MCF 10A (cell line): ENCODE measurements at regions of chr1 and their contacts with region 1.

Region 1: DNA sequence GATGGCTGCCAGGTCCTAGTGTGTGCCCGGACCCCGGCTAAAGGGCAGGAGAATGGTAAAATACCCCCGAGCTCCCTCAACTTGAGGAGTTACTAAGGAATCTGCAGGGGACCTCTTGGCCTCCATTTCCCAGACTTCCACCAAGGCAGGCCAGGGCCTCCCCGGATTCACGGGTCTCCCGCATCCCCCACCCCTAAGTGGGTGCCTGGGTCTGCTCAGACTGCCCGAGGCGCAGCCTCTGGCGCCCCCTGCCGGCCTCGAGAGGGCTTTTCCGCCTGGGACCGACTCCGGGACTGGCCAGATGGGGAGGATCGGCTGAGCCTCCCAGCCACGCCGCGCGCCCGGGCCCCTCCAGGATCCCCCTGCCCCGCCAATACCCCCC is 1.7 kb downstream of the PLEKHG5 start:
- DNase-seq: peak; percentile 78
- H3K4me3 Mint-ChIP-seq: peak overlapping the region; percentile 77
- H3K27ac Mint-ChIP-seq: peak overlapping the region; percentile 66
- H3K4me1 Mint-ChIP-seq: peaks cover 38% of the 10 kb centered on the region
- H3K27me3 Mint-ChIP-seq: no peaks in the 10 kb centered on the region
- CTCF ChIP-seq: peak; percentile 97

Region 2: DNA sequence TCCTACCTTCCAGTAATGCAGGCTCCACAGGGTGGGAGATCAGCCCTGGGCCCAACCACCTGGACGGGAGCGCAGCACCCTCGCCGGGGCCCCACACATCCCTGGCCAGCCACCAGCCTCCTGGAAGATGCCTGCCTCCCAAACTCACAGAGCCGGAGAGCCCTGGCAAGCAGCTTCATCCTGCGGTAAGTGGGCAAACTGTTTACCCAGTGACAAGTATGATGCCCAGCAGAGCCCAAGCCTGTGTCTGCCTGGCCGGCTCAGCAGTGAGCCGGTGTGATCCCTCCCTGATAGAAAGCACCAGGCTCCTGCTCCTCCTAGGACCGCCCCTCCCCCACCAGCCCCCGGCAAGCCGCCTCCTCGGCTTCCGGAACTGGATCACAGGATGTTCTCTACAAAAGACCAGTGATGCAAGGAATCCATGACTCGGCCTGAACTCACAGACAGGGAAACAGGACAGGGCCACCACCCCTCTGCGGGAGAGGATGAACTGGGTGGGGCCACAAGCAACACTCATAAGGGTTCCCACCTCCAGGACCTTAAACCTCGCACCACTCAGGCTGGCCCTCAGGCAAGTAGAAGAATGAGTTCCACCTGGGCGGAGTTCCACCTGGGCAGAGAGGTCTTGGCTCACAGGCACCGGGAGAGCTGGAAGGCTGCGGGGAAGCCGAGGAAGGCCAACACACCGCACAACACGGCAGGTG is 104.2 kb before region 1 on chr1:
- CTCF ChIA-PET with region 1: interaction called, 3 read pairs
- POLR2A ChIA-PET with region 1: interaction called, 10 read pairs
- intact Hi-C with region 1: no loop called
- DNase-seq: peak; percentile 97
- H3K4me3 Mint-ChIP-seq: peak overlapping the region; percentile 89
- H3K27ac Mint-ChIP-seq: peak overlapping the region; percentile 81
- H3K4me1 Mint-ChIP-seq: peaks cover 25% of the 10 kb centered on the region
- H3K27me3 Mint-ChIP-seq: no peaks in the 10 kb centered on the region
- CTCF ChIP-seq: no peak

Region 3: GRCh38 chr1:6414443-6414844 is 75.3 kb before region 1 on chr1:
- CTCF ChIA-PET with region 1: interaction called, 3 read pairs
- POLR2A ChIA-PET with region 1: interaction called, 28 read pairs
- intact Hi-C with region 1: no loop called
- DNase-seq: peak; percentile 97
- H3K4me3 Mint-ChIP-seq: peak overlapping the region; percentile 65
- H3K27ac Mint-ChIP-seq: peak overlapping the region; percentile 99
- H3K4me1 Mint-ChIP-seq: peaks cover 32% of the 10 kb centered on the region
- H3K27me3 Mint-ChIP-seq: no peaks in the 10 kb centered on the region
- CTCF ChIP-seq: peak; percentile 54

Region 4: GRCh38 chr1:6475381-6476133 is 14.2 kb before region 1 on chr1:
- CTCF ChIA-PET with region 1: interaction called, 18 read pairs
- POLR2A ChIA-PET with region 1: interaction called, 15 read pairs
- intact Hi-C with region 1: no loop called
- DNase-seq: peak; percentile 52
- H3K4me3 Mint-ChIP-seq: no peak overlapping the region
- H3K27ac Mint-ChIP-seq: no peak overlapping the region
- H3K4me1 Mint-ChIP-seq: peaks cover 13% of the 10 kb centered on the region
- H3K27me3 Mint-ChIP-seq: no peaks in the 10 kb centered on the region
- CTCF ChIP-seq: peak; percentile 90

Region 5: GRCh38 chr1:6554031-6554906 is 64.5 kb after region 1 on chr1 and contains the start of gene NOL9:
- CTCF ChIA-PET with region 1: interaction called, 26 read pairs
- POLR2A ChIA-PET with region 1: interaction called, 31 read pairs
- intact Hi-C with region 1: loop called (anchors 1 kb)
- DNase-seq: peak; percentile 87
- H3K4me3 Mint-ChIP-seq: peak within 1 kb of the TSS; percentile 74
- H3K27ac Mint-ChIP-seq: peak within 1 kb of the TSS; percentile 74
- H3K4me1 Mint-ChIP-seq: peaks cover 9% of the 10 kb centered on the region
- H3K27me3 Mint-ChIP-seq: no peaks in the 10 kb centered on the region
- CTCF ChIP-seq: peak; percentile 94
- total RNA-seq, gene NOL9: 49.2 and 62.3 TPM in 2 replicates

Region 6: DNA sequence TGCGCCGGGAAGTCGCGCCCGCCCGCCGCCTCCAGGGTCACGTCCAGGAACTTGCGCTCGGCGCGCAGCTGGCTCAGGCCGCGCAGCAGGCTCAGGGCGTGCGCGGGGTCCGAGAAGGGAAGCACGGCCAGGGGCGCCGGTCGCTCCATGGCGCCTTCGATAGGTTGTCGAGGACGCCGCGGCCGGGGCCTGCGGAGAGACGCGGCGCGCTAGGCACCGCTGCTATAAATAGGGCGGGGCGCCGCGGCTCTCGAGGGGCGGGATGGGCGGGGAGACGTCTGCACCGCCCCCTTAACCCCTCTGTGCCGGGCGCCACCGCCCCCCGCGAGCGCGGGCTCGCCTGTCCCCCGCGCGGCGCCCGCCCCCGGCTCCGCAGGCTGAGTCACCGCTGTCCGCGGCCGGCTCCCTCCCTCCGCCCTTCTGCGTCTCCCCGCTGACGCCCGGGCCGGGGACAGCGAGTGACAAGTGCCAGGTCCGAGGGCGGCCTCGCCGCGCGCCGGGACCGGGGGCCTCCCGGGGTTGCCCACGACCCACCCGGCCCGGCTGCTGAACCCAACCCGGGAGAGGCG is 113.0 kb after region 1 on chr1 and contains the start of gene KLHL21:
- CTCF ChIA-PET with region 1: interaction called, 4 read pairs
- POLR2A ChIA-PET with region 1: interaction called, 31 read pairs
- intact Hi-C with region 1: no loop called
- DNase-seq: peak; percentile 82
- H3K4me3 Mint-ChIP-seq: peak within 1 kb of the TSS; percentile 99
- H3K27ac Mint-ChIP-seq: peak within 1 kb of the TSS; percentile 99
- H3K4me1 Mint-ChIP-seq: peaks cover 17% of the 10 kb centered on the region
- H3K27me3 Mint-ChIP-seq: no peaks in the 10 kb centered on the region
- CTCF ChIP-seq: no peak
- total RNA-seq, gene KLHL21: 14.0 and 19.5 TPM in 2 replicates